Mucosa of descending colon (tissue), 3 donors: ENCODE measurements at regions of chr3 and their contacts with region 1.

Region 1: DNA sequence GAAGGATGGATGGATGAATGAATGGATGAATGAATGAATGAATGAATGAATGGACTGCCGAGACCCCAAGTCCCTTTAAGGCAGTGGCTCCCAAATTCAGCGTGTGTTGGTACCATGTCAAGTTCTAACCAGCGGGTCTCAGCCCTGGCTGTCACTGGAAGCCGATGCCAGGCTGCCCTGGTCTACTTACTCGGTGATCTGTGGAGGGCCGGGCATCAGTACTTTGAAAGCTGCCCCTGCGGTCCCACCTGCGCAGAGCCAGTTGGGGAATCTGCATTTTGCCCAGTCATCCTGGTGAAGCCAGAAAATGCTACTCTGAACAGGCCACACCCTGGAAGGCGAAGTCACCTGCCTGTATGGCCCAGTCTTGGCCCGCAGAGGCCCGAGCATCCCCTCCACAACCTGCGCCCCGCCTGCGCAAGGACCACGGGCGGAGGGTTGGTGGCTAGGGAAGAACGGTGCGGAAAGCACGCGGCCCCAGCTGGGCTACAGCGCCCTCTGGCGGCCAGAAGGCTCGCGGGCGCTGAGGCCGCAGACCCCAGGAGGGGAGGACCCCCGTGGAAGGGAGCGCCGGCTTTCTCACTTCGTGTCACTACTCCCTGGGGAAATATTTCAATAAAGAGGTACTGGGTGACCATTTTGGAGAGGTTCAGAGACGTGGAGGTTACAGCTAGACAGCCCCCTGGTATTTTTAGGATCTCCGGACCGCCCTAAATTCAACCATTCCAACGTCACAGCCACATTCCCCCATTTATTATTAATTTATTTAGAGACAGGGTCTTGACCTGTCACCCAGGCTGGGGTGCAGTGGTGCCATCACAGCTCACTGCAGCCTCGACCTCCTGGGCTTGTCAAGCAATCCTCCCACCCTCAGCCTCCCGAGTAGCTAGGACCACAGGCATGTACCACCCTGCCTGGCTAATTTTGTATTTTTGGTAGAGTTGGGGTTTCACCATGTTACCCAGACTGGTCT is 34.9 kb downstream of the PRKCD start:
- DNase-seq: peak in 2 of 3 donors; percentile 57 to 70
- ATAC-seq: peak; percentile 82
- H3K4me3 ChIP-seq: no peak overlapping the region
- H3K4me1 ChIP-seq: peaks cover 12% of the 10 kb centered on the region
- CTCF ChIP-seq: peak; percentile 95

Region 2: GRCh38 chr3:53114011-53114400 is 81.9 kb before region 1 on chr3:
- intact Hi-C with region 1: loop called (anchors 1 to 5 kb)
- DNase-seq: peak in 2 of 3 donors; percentile 80 to 95
- ATAC-seq: peak; percentile 94
- H3K4me3 ChIP-seq: no peak overlapping the region
- H3K4me1 ChIP-seq: no peaks in the 10 kb centered on the region
- CTCF ChIP-seq: peak; percentile 75

Region 3: DNA sequence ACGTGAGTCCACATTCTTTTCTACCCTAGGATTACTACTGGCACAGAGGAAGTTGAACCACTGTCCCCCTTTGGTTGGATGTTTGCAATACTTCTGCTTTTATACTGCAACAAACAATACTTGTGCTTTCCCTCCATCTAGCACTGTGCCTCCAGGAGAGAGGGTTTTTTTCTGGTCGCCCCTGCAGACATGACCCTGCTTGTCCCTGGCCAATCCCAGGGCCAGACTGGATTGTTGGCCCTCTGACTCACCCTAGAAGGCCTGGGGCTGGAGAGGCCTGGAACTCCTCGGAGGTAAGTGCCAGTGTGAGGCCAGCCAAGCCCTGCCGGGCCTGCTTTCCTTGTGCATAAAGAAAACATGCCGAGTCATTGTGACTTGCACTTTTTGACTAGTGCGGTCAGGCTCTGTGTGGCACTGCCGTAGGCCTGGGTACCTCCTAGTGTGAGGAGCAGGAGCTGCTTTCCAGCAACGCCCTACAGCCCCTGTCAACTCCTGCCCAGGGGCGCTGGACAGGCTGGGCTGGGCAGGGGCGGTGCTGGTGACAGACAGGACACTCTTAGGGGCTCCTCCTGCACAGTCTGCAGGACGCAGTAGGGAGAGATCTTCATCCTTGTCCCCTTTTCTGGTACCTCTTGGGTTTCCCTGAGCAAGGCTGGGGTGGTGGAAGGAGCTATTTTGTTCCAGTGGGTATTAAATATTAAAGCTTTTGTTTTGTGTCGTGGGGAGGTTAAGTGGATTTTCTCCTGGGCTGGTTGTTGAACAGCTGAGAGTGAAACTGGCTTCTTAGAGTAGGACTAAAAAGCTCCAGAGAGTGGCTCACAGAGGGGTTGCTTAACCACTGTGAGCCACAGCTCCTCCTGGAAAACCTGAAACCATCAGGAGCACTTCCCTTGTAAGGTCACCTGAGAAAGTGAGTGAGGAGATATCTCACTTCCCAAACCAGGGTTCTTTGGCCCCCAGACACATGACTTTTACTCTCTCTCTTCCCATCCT is 74.3 kb after region 1 on chr3:
- intact Hi-C with region 1: no loop called
- DNase-seq: peak; percentile 59 to 82 (median 80)
- ATAC-seq: peak; percentile 95
- H3K4me3 ChIP-seq: no peak overlapping the region
- H3K4me1 ChIP-seq: peaks cover 4% of the 10 kb centered on the region
- CTCF ChIP-seq: no peak

Region 4: DNA sequence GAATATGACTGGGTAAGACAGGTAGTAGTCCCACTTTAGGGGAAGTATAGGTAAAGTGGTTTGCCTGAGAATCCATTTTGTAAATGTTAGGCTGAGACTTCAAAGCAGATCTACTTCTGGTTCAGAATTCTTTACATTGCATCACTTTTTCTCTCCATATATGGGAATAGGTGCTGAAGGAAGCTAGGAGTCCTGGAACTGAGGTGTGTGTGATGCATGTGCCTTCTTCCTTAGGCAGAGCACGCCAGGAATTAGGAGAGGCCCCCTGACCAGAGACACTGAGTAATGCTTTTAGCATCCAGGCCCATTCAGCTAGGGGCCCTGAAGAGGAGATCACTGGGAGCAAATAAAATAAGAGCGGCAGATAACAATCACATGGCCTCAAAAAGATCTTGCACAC is 220.6 kb after region 1 on chr3:
- intact Hi-C with region 1: no loop called
- DNase-seq: no peak
- ATAC-seq: no peak
- H3K4me3 ChIP-seq: no peak overlapping the region
- H3K4me1 ChIP-seq: no peaks in the 10 kb centered on the region
- CTCF ChIP-seq: no peak

Region 5: GRCh38 chr3:53597136-53597915 is 401.4 kb after region 1 on chr3:
- intact Hi-C with region 1: no loop called
- DNase-seq: no peak
- ATAC-seq: no peak
- H3K4me3 ChIP-seq: no peak overlapping the region
- H3K4me1 ChIP-seq: no peaks in the 10 kb centered on the region
- CTCF ChIP-seq: no peak